ENCODE measurements at regions of chr22 and their contacts with region 1.

Region 1: GRCh38 chr22:40645579-40646197 is 9.2 kb upstream of the MRTFA start:
- DNase-seq: no peak
- CTCF ChIP-seq: no peak

Region 2: GRCh38 chr22:40463017-40463631 is 182.6 kb before region 1 on chr22:
- CTCF ChIA-PET with region 1: interaction called, 14 read pairs
- POLR2A ChIA-PET with region 1: no interaction called
- DNase-seq: peak; percentile 61
- CTCF ChIP-seq: no peak

Region 3: GRCh38 chr22:40519284-40519947 is 126.3 kb before region 1 on chr22:
- CTCF ChIA-PET with region 1: interaction called, 60 read pairs
- POLR2A ChIA-PET with region 1: no interaction called
- DNase-seq: peak; percentile 67
- CTCF ChIP-seq: no peak

Region 4: DNA sequence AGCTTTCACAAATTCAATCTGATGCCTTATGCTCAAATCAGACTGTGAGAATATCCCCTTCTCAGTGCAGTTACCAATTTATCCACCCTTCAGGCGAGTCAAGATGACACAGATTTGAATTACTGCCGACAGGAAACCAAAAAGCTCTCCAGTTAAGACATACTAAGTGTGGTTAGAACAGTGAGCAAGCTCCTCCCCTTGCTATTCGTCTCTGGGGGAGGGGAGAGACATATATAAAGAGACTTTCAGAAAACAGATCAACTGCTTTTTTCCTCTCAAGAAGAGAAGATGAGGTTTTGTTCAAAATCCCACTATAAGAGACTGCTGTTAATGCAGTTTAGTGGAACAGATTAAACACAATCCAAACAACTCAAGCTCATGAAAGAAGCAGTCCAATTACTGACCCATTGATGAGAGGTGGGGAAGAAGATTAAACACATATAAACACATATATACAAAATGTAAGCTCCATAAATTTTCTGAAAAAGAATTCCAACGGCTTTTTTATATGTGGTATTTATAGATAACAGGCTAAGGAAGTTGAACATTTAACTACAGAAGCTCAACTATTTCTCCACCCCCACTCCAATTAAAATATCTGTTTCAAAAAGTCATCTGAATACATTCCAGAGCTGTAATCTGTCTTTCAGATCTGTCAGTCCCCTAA is 111.8 kb before region 1 on chr22:
- CTCF ChIA-PET with region 1: interaction called, 39 read pairs
- POLR2A ChIA-PET with region 1: no interaction called
- DNase-seq: peak; percentile 70
- CTCF ChIP-seq: no peak

Region 5: DNA sequence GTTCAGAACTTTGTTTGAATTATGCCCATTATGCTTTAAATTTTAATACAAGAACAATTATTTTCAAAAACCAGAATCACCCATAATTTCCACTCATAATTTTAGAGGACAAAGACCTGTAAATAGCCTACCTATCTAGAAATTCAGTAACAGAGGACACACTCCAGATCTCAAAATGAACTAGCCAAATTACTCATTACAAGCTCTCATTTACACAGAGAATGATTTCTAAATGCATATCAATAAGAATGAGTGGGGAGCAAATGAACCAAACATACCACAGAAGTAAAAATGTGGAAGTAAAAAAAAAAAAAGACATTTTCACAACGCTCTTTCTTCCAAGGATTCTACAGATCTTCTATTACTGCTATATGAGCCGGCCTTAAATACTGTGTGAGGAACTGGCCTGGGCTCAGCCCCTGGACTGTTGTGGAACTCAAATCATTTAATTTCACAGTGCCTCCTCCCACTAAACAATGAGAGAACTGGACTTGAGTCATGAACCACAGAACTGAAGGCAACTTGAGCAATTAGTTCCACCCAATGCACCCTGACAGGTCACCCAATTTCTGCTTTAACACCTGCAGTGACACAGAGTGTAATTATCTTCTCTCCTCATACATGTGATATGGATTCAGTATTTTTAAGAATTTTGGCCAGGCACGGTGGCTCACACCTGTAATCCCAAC is 17.2 kb before region 1 on chr22:
- CTCF ChIA-PET with region 1: interaction called, 21 read pairs
- POLR2A ChIA-PET with region 1: no interaction called
- DNase-seq: peak; percentile 39
- CTCF ChIP-seq: no peak

Measured in GM10248 (cell line).